ENCODE measurements at regions of chr7 and their contacts with region 1.

Region 1: DNA sequence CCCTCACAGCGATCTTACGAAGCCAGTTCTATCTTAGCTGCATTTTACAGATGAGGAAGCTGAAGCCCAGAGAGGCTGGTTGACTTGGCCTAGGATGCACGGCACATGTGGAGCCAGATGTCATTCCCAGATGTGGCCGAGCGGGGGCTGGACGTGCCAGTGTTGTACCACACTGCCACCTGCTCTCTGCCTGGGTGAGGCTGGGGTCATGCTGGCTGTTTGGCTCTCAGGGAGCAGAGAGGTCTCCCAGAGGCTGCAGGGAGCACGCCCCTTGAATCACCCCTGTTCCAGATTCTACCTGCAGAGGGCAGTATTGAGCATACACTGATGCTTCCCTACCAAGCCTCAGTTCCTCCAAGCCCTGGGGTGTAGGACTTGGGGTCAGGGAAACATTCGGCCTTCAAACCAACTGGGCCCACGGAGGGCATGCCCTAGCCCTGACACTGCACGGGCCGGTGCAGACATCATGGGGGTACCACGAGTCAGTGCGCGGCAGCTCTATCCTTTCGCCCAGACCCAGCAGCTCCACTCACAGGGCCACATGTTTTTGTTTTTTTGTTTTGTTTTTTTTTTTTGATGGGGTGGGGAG is 3.8 kb upstream of the GTF2IRD1 start:
- DNase-seq: peak; percentile 20
- ATAC-seq: peak; percentile 82
- H3K4me3 ChIP-seq: no peak overlapping the region
- H3K27ac ChIP-seq: no peak overlapping the region
- H3K4me1 ChIP-seq: peaks cover 5% of the 10 kb centered on the region
- H3K27me3 ChIP-seq: no peaks in the 10 kb centered on the region
- CTCF ChIP-seq: peak; percentile 69 to 89 (median 81)
- EP300 ChIP-seq: no peak
- POLR2A ChIP-seq: no peak
- RAD21 ChIP-seq: peak; percentile 55

Region 2: GRCh38 chr7:74439546-74439945 is 10.4 kb before region 1 on chr7:
- CTCF ChIA-PET with region 1: interaction called, 13 read pairs
- POLR2A ChIA-PET with region 1: no interaction called
- RAD21 ChIA-PET with region 1: interaction called, 3 read pairs
- SMC1A ChIA-PET with region 1: no interaction called
- in situ Hi-C with region 1: no loop called
- intact Hi-C with region 1: no loop called
- DNase-seq: no peak
- ATAC-seq: no peak
- H3K4me3 ChIP-seq: no peak overlapping the region
- H3K27ac ChIP-seq: no peak overlapping the region
- H3K4me1 ChIP-seq: no peaks in the 10 kb centered on the region
- H3K27me3 ChIP-seq: no peaks in the 10 kb centered on the region; a peak in 1 of 4 replicates
- CTCF ChIP-seq: no peak
- EP300 ChIP-seq: no peak
- POLR2A ChIP-seq: no peak
- RAD21 ChIP-seq: no peak

Region 3: GRCh38 chr7:74464943-74465886 is 15.3 kb after region 1 on chr7:
- CTCF ChIA-PET with region 1: interaction called, 25 read pairs
- POLR2A ChIA-PET with region 1: no interaction called
- RAD21 ChIA-PET with region 1: interaction called, 3 read pairs
- SMC1A ChIA-PET with region 1: interaction called, 3 read pairs
- in situ Hi-C with region 1: no loop called
- intact Hi-C with region 1: no loop called
- DNase-seq: no peak
- ATAC-seq: no peak
- H3K4me3 ChIP-seq: no peak overlapping the region
- H3K27ac ChIP-seq: no peak overlapping the region
- H3K4me1 ChIP-seq: peaks cover 2% of the 10 kb centered on the region; the same call in 1 of the 2 replicates
- H3K27me3 ChIP-seq: no peaks in the 10 kb centered on the region
- CTCF ChIP-seq: no peak
- EP300 ChIP-seq: no peak
- POLR2A ChIP-seq: no peak
- RAD21 ChIP-seq: no peak

Region 4: GRCh38 chr7:74569501-74570075 is 119.7 kb after region 1 on chr7:
- CTCF ChIA-PET with region 1: interaction called, 61 read pairs
- POLR2A ChIA-PET with region 1: no interaction called
- RAD21 ChIA-PET with region 1: interaction called, 18 read pairs
- SMC1A ChIA-PET with region 1: interaction called, 18 read pairs
- in situ Hi-C with region 1: loop called (anchors 25 kb)
- intact Hi-C with region 1: loop called (anchors 1 kb)
- DNase-seq: no peak
- ATAC-seq: no peak
- H3K4me3 ChIP-seq: no peak overlapping the region
- H3K27ac ChIP-seq: no peak overlapping the region
- H3K4me1 ChIP-seq: no peaks in the 10 kb centered on the region
- H3K27me3 ChIP-seq: no peaks in the 10 kb centered on the region
- CTCF ChIP-seq: no peak
- EP300 ChIP-seq: no peak
- POLR2A ChIP-seq: no peak
- RAD21 ChIP-seq: no peak

Region 5: DNA sequence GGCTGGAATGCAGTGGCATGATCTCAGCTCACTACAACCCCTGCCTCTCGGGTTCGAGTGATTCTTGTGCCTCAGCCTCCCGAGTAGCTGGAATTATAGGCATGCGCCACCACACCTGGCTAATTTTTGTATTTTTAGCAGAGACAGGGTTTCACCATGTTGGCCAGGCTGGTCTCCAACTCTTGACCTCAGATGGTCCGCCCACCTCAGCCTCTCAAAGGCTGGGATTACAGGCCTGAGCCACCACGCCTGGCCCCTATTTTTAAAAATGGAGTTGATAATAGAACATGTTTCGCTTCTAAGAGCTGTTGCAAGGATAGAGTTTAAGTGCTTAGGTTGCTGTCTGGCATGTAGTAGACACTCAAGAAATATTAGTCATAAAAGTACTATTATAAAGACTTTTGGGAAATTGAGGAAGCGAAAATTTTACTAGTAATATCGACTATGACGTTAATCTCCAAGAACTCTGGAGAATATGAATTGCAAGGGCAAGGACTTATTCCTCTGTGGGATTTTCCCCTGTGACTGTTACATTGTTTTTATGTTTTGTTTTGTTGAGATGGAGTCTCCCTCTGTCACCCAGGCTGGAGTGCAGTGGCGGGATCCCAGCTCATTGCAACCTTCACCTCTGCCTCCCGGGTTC is 215.5 kb after region 1 on chr7:
- CTCF ChIA-PET with region 1: no interaction called
- POLR2A ChIA-PET with region 1: interaction called, 3 read pairs
- RAD21 ChIA-PET with region 1: no interaction called
- SMC1A ChIA-PET with region 1: no interaction called
- in situ Hi-C with region 1: no loop called
- intact Hi-C with region 1: loop called (anchors 10 kb)
- DNase-seq: no peak
- ATAC-seq: peak; percentile 9
- H3K4me3 ChIP-seq: no peak overlapping the region
- H3K27ac ChIP-seq: peak overlapping the region; percentile 47; the same call in 1 of the 2 replicates
- H3K4me1 ChIP-seq: peaks cover 22% of the 10 kb centered on the region
- H3K27me3 ChIP-seq: no peaks in the 10 kb centered on the region
- CTCF ChIP-seq: no peak
- EP300 ChIP-seq: no peak
- POLR2A ChIP-seq: no peak
- RAD21 ChIP-seq: no peak